Caco-2 (cell line): ENCODE measurements at regions of chr12 and their contacts with region 1.

Region 1: DNA sequence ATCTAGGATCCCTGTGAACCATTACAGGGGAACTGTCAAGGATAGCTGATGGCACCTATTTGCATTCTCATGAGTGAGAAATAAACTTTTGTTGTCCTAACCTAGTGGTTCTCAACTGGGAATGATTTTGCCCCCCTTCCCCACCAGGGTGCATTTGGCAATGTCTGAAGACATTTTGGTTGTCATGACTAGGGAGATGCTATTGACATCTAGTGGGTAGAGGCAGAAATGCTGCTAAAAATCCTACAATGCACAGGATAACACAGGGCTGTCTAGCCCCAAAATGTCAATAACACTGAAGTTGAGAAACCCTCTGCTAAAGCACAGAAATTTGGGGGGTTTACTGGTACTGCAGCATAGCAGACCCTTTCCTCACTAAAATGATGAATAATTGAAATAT is 140.9 kb upstream of the SRRM4 start:
- DNase-seq: peak in 1 of 2 experiments; percentile 36
- H3K4me3 ChIP-seq: no peak overlapping the region
- H3K4me3 Mint-ChIP-seq: no peak overlapping the region
- H3K27ac Mint-ChIP-seq: no peak overlapping the region
- H3K4me1 ChIP-seq: no peaks in the 10 kb centered on the region
- H3K4me1 Mint-ChIP-seq: no peaks in the 10 kb centered on the region
- H3K27me3 ChIP-seq: no peaks in the 10 kb centered on the region
- H3K27me3 Mint-ChIP-seq: peaks cover 4% of the 10 kb centered on the region
- CTCF ChIP-seq: peak; percentile 49 to 55

Region 2: DNA sequence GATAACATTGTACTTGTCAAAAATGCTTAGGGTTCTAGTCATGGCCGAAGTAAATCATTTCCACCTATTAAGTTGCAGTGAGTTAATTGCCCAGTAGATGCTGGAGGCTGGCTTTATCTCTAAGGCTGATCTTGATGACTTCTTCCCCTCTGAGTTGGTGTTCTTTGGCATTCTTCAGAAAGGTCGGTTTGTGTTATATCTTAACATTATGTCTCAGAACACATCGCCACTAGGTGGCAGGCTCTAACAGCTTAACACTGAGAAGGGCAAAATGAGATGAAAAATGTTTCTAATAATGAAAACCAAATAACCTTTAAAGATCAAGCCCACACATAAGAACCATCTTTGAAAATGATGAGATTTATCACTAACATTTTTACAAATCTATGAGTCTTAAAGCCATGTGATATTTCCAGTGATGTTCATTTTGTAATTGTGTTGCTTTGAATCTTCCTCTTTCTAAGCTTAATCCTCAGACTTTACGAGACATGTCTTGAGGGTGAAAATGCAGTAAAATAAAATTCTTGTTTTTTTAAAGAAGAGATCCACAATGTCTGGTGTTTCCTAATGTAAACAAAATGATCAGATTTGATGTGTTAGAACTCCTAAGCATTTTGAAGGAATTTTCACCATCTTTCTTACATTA is 435.4 kb before region 1 on chr12:
- CTCF ChIA-PET with region 1: no interaction called
- POLR2A ChIA-PET with region 1: no interaction called
- intact Hi-C with region 1: loop called (anchors 1 kb)
- DNase-seq: peak; percentile 55 to 58
- H3K4me3 ChIP-seq: no peak overlapping the region
- H3K4me3 Mint-ChIP-seq: no peak overlapping the region
- H3K27ac Mint-ChIP-seq: no peak overlapping the region
- H3K4me1 ChIP-seq: no peaks in the 10 kb centered on the region
- H3K4me1 Mint-ChIP-seq: no peaks in the 10 kb centered on the region
- H3K27me3 ChIP-seq: no peaks in the 10 kb centered on the region
- H3K27me3 Mint-ChIP-seq: no peaks in the 10 kb centered on the region
- CTCF ChIP-seq: peak; percentile 63 to 75

Region 3: GRCh38 chr12:118714051-118714460 is 126.3 kb before region 1 on chr12:
- CTCF ChIA-PET with region 1: interaction called, 3 read pairs
- POLR2A ChIA-PET with region 1: no interaction called
- intact Hi-C with region 1: loop called (anchors 5 kb)
- DNase-seq: peak; percentile 45 to 49
- H3K4me3 ChIP-seq: no peak overlapping the region
- H3K4me3 Mint-ChIP-seq: no peak overlapping the region
- H3K27ac Mint-ChIP-seq: no peak overlapping the region
- H3K4me1 ChIP-seq: peaks cover 21% of the 10 kb centered on the region
- H3K4me1 Mint-ChIP-seq: peaks cover 18% of the 10 kb centered on the region
- H3K27me3 ChIP-seq: no peaks in the 10 kb centered on the region
- H3K27me3 Mint-ChIP-seq: peaks cover 2% of the 10 kb centered on the region
- CTCF ChIP-seq: peak; percentile 51 to 56